Activated CD4-positive, alpha-beta T cell treated with anti-CD3 and anti-CD28 coated beads, Interleukin-2, amount 10 ng/mL, durations not matched to agents 24 days and 14 days (primary cell): ENCODE measurements at regions of chr3 and their contacts with region 1.

Region 1: GRCh38 chr3:46070595-46071093 is 43.4 kb upstream of the XCR1 start:
- DNase-seq: no peak
- H3K4me3 Mint-ChIP-seq: peak overlapping the region; percentile 47
- H3K27ac Mint-ChIP-seq: peak overlapping the region; percentile 68
- H3K4me1 Mint-ChIP-seq: peaks cover 58% of the 10 kb centered on the region
- H3K27me3 Mint-ChIP-seq: peaks cover 39% of the 10 kb centered on the region

Region 2: DNA sequence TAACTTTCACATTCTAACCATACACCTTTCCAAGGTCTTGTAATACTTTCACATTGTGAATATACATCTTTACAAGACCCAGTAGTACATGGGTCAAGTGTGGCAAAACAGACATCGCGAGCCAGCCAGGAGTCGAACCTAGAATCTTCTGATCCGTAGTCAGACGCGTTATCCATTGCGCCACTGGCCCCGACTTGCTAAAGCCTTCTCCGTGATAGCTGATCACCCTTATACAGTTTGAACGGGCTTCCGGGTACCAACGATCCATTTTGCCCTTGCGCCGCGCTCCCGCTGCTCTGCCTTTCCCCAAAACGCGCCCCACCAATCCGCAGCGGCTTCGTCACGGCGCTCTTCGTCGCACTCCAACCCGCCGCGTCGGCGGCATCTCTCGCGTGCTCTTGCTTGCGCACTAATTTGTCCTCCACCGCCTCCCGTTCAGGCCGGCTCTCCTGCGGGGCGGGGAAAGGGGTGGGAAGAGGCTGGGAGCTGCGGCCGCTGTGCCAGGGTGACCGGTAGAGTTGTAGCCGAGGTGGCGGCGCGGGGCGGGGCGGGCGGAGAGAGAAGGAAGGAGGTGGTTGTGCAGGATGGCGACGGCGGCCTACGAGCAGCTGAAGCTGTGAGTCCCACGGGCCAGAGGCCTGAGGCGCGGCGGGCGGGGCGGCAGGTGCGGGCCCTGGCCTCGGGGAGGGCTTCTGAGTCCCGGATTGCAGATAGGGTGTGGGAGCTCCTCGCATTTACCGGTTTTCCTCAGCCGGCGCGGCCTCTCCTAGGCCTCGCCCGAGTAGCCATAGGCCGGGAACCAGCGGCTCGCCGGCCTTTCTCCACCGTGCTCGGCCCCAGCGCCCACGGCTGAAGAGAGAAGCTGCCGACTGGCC is 381.5 kb before region 1 on chr3 and contains the start of gene SACM1L:
- intact Hi-C with region 1: no loop called
- DNase-seq: peak; percentile 99
- H3K4me3 Mint-ChIP-seq: peak within 1 kb of the TSS; percentile 87
- H3K27ac Mint-ChIP-seq: peak within 1 kb of the TSS; percentile 94
- H3K4me1 Mint-ChIP-seq: peaks cover 46% of the 10 kb centered on the region
- H3K27me3 Mint-ChIP-seq: peaks cover 4% of the 10 kb centered on the region
- total RNA-seq, gene SACM1L: 88.0 and 91.7 TPM in 2 replicates

Region 3: GRCh38 chr3:45958321-45958791 is 112.3 kb before region 1 on chr3:
- intact Hi-C with region 1: loop called (anchors 1 kb)
- DNase-seq: no peak
- H3K4me3 Mint-ChIP-seq: no peak overlapping the region
- H3K27ac Mint-ChIP-seq: no peak overlapping the region
- H3K4me1 Mint-ChIP-seq: peaks cover 43% of the 10 kb centered on the region
- H3K27me3 Mint-ChIP-seq: no peaks in the 10 kb centered on the region

Region 4: GRCh38 chr3:45964139-45964538 is 106.5 kb before region 1 on chr3:
- intact Hi-C with region 1: loop called (anchors 1 kb)
- DNase-seq: peak; percentile 80
- H3K4me3 Mint-ChIP-seq: peak overlapping the region; percentile 67
- H3K27ac Mint-ChIP-seq: peak overlapping the region; percentile 81
- H3K4me1 Mint-ChIP-seq: peaks cover 69% of the 10 kb centered on the region
- H3K27me3 Mint-ChIP-seq: no peaks in the 10 kb centered on the region

Region 5: DNA sequence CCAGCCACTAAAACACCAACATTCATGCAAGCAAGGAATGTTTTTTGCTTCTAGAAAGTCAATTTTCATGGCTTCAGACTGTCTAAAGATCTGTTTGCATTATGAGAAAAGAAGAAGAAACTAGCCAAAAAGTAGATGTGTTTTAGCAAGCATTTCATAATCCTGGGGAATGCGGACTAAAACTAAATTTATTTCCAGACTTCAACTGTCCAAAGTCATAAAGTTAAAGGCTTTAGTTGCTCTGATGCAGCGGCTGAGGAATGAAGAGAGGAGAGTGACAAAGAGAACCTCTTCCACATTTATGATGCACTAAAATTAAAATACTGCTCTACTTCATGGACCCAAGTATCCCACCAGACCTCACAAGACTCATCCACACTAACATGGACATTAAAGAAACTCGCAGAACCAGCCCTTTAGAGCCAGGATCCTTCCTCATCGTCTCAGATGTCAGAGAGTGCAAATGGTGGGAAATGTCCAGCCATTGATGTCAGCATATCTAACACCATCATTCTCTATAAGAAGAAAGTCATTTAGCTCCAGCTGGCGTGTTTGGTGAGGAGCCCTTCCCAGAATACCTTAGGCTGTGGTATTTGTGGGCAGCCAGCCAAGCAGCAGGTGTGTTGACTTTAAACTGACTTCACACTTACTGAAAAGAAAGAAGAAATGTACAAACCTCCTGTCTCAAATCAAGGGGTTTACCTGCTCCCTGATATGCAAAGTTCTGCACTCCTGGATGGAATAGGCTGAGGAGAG is 92.5 kb before region 1 on chr3:
- intact Hi-C with region 1: loop called (anchors 1 kb)
- DNase-seq: peak; percentile 91
- H3K4me3 Mint-ChIP-seq: peak overlapping the region; percentile 80
- H3K27ac Mint-ChIP-seq: peak overlapping the region; percentile 95
- H3K4me1 Mint-ChIP-seq: peaks cover 84% of the 10 kb centered on the region
- H3K27me3 Mint-ChIP-seq: no peaks in the 10 kb centered on the region

Region 6: GRCh38 chr3:46017720-46018119 is 52.9 kb before region 1 on chr3:
- intact Hi-C with region 1: loop called (anchors 2 kb)
- DNase-seq: no peak
- H3K4me3 Mint-ChIP-seq: peak overlapping the region; percentile 4
- H3K27ac Mint-ChIP-seq: peak overlapping the region; percentile 79
- H3K4me1 Mint-ChIP-seq: peaks cover 42% of the 10 kb centered on the region
- H3K27me3 Mint-ChIP-seq: peaks cover 10% of the 10 kb centered on the region

Region 7: DNA sequence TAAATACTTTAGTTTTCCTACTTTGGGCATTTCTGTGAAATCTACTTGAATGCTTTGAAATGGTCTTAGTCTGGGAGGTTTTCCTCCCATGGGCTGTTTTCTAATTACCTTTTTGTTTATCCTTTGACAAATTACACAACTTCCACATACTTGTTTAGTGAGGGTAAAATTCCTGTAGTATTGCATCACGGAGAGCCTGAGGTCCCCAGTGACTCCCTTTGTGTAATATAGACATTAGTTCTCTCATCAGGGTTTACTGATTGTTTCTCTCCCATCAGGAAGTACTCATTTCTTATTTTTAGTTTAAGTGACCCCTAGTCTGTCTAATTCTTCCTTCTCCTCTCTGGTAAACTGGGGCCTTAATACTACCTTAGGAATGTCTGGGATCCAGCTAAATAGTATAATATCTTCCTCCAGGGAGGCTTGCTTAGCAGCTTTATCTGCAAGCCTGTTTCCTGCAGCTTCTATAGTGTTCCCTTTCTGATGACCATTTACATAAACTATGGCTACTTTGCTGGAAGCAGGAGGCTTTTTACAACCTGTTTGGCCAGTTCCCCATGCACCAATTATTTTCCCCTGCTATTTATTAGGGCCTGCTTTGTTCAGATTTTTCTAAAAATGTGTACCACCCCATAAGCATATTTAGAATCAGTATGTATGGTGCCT is 43.8 kb after region 1 on chr3:
- intact Hi-C with region 1: no loop called
- DNase-seq: no peak
- H3K4me3 Mint-ChIP-seq: no peak overlapping the region
- H3K27ac Mint-ChIP-seq: no peak overlapping the region
- H3K4me1 Mint-ChIP-seq: peaks cover 33% of the 10 kb centered on the region
- H3K27me3 Mint-ChIP-seq: peaks cover 2% of the 10 kb centered on the region